ENCODE measurements at regions of chr7 and their contacts with region 1.

Region 1: GRCh38 chr7:98168181-98168905 is 42.9 kb upstream of the BHLHA15 start:
- DNase-seq: peak; percentile 91
- H3K4me3 ChIP-seq: no peak overlapping the region
- H3K27ac ChIP-seq: no peak overlapping the region
- H3K4me1 ChIP-seq: peaks cover 0 to 14% of the 10 kb centered on the region in 2 experiments; a peak in 2 of 4 replicates
- H3K27me3 ChIP-seq: no peaks in the 10 kb centered on the region
- CTCF ChIP-seq: peak; percentile 100
- EP300 ChIP-seq: no peak
- RAD21 ChIP-seq: peak; percentile 95

Region 2: GRCh38 chr7:98034081-98035035 is 134.0 kb before region 1 on chr7:
- CTCF ChIA-PET with region 1: interaction called, 13 read pairs
- POLR2A ChIA-PET with region 1: no interaction called
- DNase-seq: peak; percentile 62
- H3K4me3 ChIP-seq: peak overlapping the region in 1 of 2 experiments; percentile 24; a peak in 1 of 4 replicates
- H3K27ac ChIP-seq: no peak overlapping the region
- H3K4me1 ChIP-seq: no peaks in the 10 kb centered on the region; a peak in 1 of 4 replicates
- H3K27me3 ChIP-seq: peaks cover 22% of the 10 kb centered on the region; the same call in 1 of the 2 replicates
- CTCF ChIP-seq: no peak
- EP300 ChIP-seq: no peak
- RAD21 ChIP-seq: no peak

Region 3: GRCh38 chr7:98097042-98097645 is 71.2 kb before region 1 on chr7:
- CTCF ChIA-PET with region 1: interaction called, 22 read pairs
- POLR2A ChIA-PET with region 1: no interaction called
- DNase-seq: no peak
- H3K4me3 ChIP-seq: no peak overlapping the region
- H3K27ac ChIP-seq: no peak overlapping the region
- H3K4me1 ChIP-seq: no peaks in the 10 kb centered on the region
- H3K27me3 ChIP-seq: no peaks in the 10 kb centered on the region
- CTCF ChIP-seq: no peak
- EP300 ChIP-seq: no peak
- RAD21 ChIP-seq: no peak

Region 4: DNA sequence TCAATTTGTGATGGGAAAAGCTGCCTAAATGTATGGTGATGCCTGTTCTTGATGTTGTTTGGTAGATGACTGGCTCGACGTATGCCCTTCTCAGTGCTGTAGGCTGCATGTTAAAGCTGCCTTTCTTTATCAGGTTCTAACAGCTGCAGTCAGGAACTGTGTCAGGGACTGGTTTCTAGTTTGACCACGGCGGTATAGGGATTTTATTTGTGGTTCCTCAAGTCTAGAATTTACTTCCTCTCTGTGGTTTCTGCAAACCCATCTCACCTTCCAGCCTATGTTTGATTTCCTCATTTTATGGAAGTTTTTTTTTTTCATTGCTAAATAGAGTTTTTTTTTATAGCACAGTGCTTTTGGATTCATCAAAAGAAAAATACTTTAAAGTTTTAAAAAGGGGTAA is 35.2 kb before region 1 on chr7:
- CTCF ChIA-PET with region 1: interaction called, 126 read pairs
- POLR2A ChIA-PET with region 1: no interaction called
- DNase-seq: no peak
- H3K4me3 ChIP-seq: no peak overlapping the region
- H3K27ac ChIP-seq: no peak overlapping the region
- H3K4me1 ChIP-seq: peaks cover 20 to 23% of the 10 kb centered on the region in 2 experiments; a peak in 3 of 4 replicates
- H3K27me3 ChIP-seq: no peaks in the 10 kb centered on the region
- CTCF ChIP-seq: no peak
- EP300 ChIP-seq: no peak
- RAD21 ChIP-seq: no peak

Region 5: DNA sequence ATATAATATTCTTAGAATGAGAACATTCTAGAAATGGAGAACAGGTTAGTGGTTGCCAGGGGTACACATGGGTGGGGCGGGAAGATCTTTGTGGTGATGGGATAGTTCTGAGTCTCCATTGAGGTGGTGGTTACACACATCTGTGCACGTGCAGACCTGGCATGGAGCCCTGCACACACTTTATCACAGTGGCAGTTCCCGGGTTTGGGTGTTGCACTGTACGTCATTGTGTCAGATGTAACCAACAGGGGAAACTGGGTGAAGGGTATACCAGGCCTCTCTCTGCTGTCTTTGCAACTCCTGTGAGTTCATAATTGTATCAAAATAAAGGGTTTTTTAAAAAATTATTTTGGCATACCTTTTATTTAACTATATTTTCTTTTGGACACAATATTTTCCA is 10.6 kb before region 1 on chr7:
- CTCF ChIA-PET with region 1: interaction called, 133 read pairs
- POLR2A ChIA-PET with region 1: no interaction called
- DNase-seq: no peak
- H3K4me3 ChIP-seq: no peak overlapping the region
- H3K27ac ChIP-seq: no peak overlapping the region
- H3K4me1 ChIP-seq: no peaks in the 10 kb centered on the region
- H3K27me3 ChIP-seq: no peaks in the 10 kb centered on the region
- CTCF ChIP-seq: no peak
- EP300 ChIP-seq: no peak
- RAD21 ChIP-seq: no peak

Region 6: DNA sequence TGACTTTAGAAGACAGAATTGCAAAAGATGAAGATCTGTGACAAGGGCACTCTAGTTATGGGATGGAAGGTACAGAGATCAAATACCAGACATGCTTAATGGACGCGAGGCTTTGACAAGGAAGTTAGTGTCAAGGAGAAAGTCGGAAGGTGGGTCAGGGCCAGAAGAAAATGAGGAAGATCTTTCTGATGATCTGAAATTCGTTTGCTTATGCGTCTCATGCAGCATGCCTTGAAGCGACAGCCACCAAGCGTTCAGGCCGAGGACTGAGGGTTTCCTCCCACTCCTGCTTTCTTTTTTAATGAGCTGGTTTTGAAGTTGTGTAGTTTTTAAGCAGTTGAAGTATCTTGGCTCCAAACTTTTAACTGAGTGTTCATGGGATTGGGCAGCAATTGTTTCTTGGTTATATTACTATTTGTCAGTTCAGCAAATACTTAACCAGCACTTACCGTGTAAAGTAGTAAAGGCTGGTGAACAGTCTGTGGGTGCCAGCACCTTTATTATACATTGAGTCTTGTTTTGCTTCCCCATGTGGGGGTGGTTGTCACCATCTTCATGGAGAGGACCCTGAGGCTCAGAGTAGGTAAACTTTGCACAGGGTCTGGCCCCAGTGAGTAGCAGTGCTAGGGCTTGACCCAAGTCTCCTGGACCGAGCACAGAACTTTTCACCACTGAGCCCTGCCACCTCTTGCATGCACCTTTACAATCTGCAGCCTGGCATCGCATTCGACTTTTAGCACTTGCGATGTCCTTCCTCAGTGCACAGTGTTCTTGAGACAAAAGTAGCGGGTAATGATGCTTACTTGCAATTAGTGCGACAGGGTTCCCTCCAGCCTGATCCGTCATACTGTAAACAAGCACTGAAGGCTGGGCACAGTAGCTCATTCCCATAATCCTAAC is 28.6 kb after region 1 on chr7:
- CTCF ChIA-PET with region 1: interaction called, 11 read pairs
- POLR2A ChIA-PET with region 1: no interaction called
- DNase-seq: no peak
- H3K4me3 ChIP-seq: no peak overlapping the region
- H3K27ac ChIP-seq: no peak overlapping the region
- H3K4me1 ChIP-seq: no peaks in the 10 kb centered on the region
- H3K27me3 ChIP-seq: no peaks in the 10 kb centered on the region
- CTCF ChIP-seq: no peak
- EP300 ChIP-seq: no peak
- RAD21 ChIP-seq: no peak

Region 7: GRCh38 chr7:98266840-98267239 is 98.5 kb after region 1 on chr7:
- CTCF ChIA-PET with region 1: no interaction called
- POLR2A ChIA-PET with region 1: no interaction called
- DNase-seq: peak; percentile 52
- H3K4me3 ChIP-seq: no peak overlapping the region
- H3K27ac ChIP-seq: no peak overlapping the region
- H3K4me1 ChIP-seq: 0 out of 4 replicates have a peak, but pooled peaks cover 0 to 4% of the 10 kb centered on the region in 2 experiments
- H3K27me3 ChIP-seq: no peaks in the 10 kb centered on the region
- CTCF ChIP-seq: peak; percentile 48
- EP300 ChIP-seq: no peak
- RAD21 ChIP-seq: peak; percentile 43

Measured in SK-N-SH (cell line).